ENCODE measurements at regions of chr10 and their contacts with region 1.

Region 1: GRCh38 chr10:91551856-91552255 is 81.0 kb downstream of the PPP1R3C start:
- DNase-seq: no peak
- H3K4me3 ChIP-seq: no peak overlapping the region
- CTCF ChIP-seq: peak; percentile 79

Region 2: DNA sequence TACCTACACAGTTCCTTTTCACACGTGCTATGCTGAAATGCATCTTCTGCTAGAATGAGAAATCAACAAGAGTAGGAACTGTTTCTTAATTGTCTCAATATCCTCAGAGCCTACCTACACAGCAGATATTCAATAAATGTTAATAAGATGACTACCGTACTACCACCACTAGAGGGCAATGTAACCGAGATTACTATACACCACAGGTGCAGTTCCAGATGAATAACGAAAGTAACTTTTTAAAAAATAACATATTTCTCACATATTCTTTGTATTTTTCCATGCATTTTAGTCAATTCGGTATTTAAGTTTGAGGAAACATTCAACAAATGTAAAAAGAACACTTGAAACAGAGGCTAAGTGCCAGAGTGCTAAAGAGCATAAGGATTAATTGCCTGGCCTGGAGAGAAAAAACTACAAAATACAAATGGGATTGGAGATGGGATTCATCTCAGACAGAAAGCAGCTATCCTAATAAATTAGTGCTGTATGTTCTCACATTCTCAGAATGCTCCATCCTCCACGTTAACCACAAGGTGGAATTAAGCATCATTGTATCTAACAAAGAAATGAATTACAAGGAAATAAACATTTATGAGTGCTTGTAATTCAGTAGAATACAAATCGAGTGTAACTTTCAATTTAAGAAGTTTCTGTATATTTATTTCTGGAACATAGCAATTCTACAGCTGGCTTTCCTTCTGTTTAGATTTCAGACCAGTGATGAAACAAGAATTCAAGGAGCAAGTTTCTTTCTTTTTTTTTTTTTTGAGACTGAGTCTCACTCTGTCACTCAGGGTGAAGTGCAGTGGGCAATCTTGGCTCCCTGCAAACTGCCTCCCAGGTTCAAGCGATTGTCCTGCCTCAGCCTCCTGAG is 162.0 kb before region 1 on chr10:
- CTCF ChIA-PET with region 1: interaction called, 11 read pairs
- POLR2A ChIA-PET with region 1: no interaction called
- DNase-seq: no peak
- H3K4me3 ChIP-seq: no peak overlapping the region
- CTCF ChIP-seq: peak; percentile 30

Region 3: GRCh38 chr10:91493313-91493712 is 58.5 kb before region 1 on chr10:
- CTCF ChIA-PET with region 1: interaction called, 118 read pairs
- POLR2A ChIA-PET with region 1: no interaction called
- DNase-seq: peak; percentile 16
- H3K4me3 ChIP-seq: no peak overlapping the region
- CTCF ChIP-seq: no peak

Region 4: DNA sequence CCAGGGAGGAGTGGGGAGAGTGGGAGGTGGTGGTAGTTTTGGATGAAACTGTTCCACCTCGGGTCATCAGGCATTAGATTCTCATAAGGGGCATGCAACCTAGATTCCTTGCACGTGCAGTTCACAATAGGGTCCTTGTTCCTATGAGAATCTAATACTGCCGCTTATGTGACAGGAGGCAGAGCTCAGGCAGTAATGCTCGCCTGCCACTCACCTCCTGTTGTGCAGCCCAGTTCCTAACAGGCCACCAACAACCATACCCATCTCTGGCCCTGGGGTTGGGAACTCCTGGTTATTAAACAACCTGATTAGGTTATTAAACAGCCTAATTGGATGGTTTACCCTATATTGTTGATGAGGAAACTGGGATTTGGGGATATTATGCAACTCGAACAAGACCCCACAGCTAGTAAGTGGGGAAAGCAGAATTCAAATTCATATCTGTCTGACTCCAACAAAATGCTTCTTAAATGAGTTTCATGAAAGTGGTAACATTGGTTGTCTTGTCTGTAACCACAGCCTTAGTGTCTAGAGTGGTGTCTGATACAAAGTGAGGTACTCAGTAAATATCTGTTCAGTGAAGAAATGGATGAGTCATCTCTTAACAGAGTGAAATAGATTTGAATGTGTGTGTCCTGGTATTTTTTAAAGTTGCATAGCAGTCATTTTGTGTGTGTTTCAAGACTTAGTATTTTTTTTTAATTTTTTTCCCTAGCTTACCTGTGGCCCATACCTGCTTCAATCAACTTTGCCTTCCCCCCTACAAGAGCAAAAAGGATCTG is 40.1 kb before region 1 on chr10:
- CTCF ChIA-PET with region 1: no interaction called
- POLR2A ChIA-PET with region 1: no interaction called
- DNase-seq: peak; percentile 75
- H3K4me3 ChIP-seq: no peak overlapping the region
- CTCF ChIP-seq: no peak

Region 5: GRCh38 chr10:91541481-91541880 is 10.4 kb before region 1 on chr10:
- CTCF ChIA-PET with region 1: interaction called, 26 read pairs
- POLR2A ChIA-PET with region 1: no interaction called
- DNase-seq: no peak
- H3K4me3 ChIP-seq: no peak overlapping the region
- CTCF ChIP-seq: no peak

Region 6: DNA sequence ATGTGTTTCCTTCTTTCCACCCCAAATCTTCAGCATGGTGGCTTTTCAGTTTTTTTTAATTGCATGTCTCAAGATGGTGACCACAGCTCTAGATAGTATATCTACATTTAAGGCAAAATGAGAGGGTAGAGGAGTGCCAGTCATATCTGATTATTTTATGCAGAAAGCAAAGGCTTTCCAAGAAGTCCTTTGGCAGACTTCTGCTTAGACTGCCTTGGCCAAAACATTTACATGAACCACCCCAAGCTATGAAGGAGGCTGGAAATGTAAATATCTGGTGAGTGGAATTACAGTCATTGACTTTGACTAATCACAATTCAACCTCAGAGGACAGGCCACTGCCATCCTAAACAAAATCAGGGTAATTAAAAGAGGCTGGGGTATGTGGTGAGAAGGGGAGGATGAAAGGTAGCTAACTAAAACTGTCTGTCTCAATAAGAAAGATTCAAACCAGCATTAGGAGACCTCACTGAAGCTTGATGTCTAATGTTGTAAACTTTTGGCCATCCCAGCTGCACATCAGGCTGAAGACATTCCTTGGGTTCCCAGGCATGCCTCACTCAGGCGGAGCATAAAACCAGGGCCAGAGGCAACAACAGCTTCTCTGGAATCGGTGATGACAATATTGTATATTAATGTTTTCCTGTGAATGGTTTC is 27.6 kb after region 1 on chr10:
- CTCF ChIA-PET with region 1: interaction called, 10 read pairs
- POLR2A ChIA-PET with region 1: no interaction called
- DNase-seq: no peak
- H3K4me3 ChIP-seq: no peak overlapping the region
- CTCF ChIP-seq: no peak

Region 7: GRCh38 chr10:91694170-91694794 is 142.4 kb after region 1 on chr10:
- CTCF ChIA-PET with region 1: interaction called, 23 read pairs
- POLR2A ChIA-PET with region 1: no interaction called
- DNase-seq: no peak
- H3K4me3 ChIP-seq: no peak overlapping the region
- CTCF ChIP-seq: peak; percentile 72

Region 8: DNA sequence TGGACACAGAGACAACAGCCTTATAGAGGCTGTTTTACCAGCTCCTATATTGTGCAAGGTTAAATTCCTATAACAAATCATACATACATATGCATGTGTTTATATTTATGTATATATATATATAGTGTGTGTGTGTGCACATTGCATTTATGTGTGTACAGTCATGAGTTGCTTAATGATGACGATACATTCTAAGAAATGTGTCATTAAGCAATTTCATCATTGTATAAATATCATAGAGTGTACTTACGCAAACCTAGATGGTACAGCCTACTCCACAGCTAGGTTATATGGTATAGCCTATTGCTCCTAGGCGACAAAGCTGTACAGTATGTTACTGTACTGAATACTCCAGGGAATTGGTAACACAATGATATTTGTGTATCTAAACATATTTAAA is 216.3 kb after region 1 on chr10:
- CTCF ChIA-PET with region 1: no interaction called
- POLR2A ChIA-PET with region 1: no interaction called
- DNase-seq: no peak
- H3K4me3 ChIP-seq: no peak overlapping the region
- CTCF ChIP-seq: no peak

Region 9: DNA sequence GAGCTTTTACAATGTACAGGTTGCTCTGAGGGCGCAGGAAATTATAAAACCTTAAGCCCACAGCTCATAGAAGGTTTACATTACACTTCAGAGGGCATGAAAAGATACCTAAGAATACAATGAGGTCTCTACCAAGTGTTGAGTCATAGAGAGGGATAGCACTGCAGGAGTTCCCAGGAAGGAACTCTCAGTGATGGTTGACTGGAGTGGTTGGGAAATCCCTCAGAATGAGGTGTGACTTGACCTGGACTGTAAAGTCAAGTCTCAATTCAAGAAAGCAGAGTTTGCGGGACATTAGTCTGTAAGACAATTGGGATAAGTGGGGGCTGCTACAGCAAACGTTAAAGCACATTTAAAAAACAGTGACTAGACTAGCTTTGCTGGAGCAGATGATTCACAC is 268.3 kb after region 1 on chr10:
- CTCF ChIA-PET with region 1: no interaction called
- POLR2A ChIA-PET with region 1: no interaction called
- DNase-seq: no peak
- H3K4me3 ChIP-seq: no peak overlapping the region
- CTCF ChIP-seq: no peak

Measured in AG04449 (cell line).